CD4-positive, alpha-beta T cell (primary cell): ENCODE measurements at regions of chr10 and their contacts with region 1.

Region 1: GRCh38 chr10:88582806-88583583 is at the start of gene RNLS:
- DNase-seq: peak; percentile 39 to 85 (median 63)
- ATAC-seq: peak; percentile 82
- H3K4me3 ChIP-seq: peak within 1 kb of the TSS; percentile 83
- H3K4me3 Mint-ChIP-seq: peak within 1 kb of the TSS; percentile 92
- H3K27ac ChIP-seq: peak within 1 kb of the TSS; percentile 77 to 87
- H3K27ac Mint-ChIP-seq: peak within 1 kb of the TSS; percentile 54
- H3K4me1 ChIP-seq: peaks cover 7% of the 10 kb centered on the region
- H3K4me1 Mint-ChIP-seq: peaks cover 14% of the 10 kb centered on the region
- H3K27me3 ChIP-seq: no peaks in the 10 kb centered on the region
- H3K27me3 Mint-ChIP-seq: peaks cover 6% of the 10 kb centered on the region
- CTCF ChIP-seq: peak; percentile 86
- total RNA-seq, gene RNLS: 0.95 to 2.7 TPM

Region 2: GRCh38 chr10:87761892-87762291 is 821.1 kb before region 1 on chr10:
- CTCF ChIA-PET with region 1: no interaction called
- POLR2A ChIA-PET with region 1: no interaction called
- intact Hi-C with region 1: no loop called
- DNase-seq: peak in 3 of 14 experiments; percentile 14 to 33 (median 24)
- ATAC-seq: no peak
- H3K4me3 ChIP-seq: no peak overlapping the region
- H3K4me3 Mint-ChIP-seq: no peak overlapping the region
- H3K27ac ChIP-seq: no peak overlapping the region
- H3K27ac Mint-ChIP-seq: no peak overlapping the region
- H3K4me1 ChIP-seq: no peaks in the 10 kb centered on the region
- H3K4me1 Mint-ChIP-seq: peaks cover 5% of the 10 kb centered on the region
- H3K27me3 ChIP-seq: no peaks in the 10 kb centered on the region
- H3K27me3 Mint-ChIP-seq: no peaks in the 10 kb centered on the region
- CTCF ChIP-seq: no peak

Region 3: GRCh38 chr10:88800152-88801125 is 217.4 kb after region 1 on chr10:
- CTCF ChIA-PET with region 1: no interaction called
- POLR2A ChIA-PET with region 1: no interaction called
- intact Hi-C with region 1: loop called in 1 of 2 experiments (anchors 10 kb)
- DNase-seq: no peak
- ATAC-seq: no peak
- H3K4me3 ChIP-seq: no peak overlapping the region
- H3K4me3 Mint-ChIP-seq: no peak overlapping the region
- H3K27ac ChIP-seq: no peak overlapping the region
- H3K27ac Mint-ChIP-seq: no peak overlapping the region
- H3K4me1 ChIP-seq: no peaks in the 10 kb centered on the region
- H3K4me1 Mint-ChIP-seq: no peaks in the 10 kb centered on the region
- H3K27me3 ChIP-seq: no peaks in the 10 kb centered on the region
- H3K27me3 Mint-ChIP-seq: no peaks in the 10 kb centered on the region
- CTCF ChIP-seq: no peak